ENCODE measurements at regions of chr14 and their contacts with region 1.

Region 1: GRCh38 chr14:64438181-64438841 is 27.0 kb upstream of the AKAP5 start:
- DNase-seq: no peak
- ATAC-seq: peak; percentile 51
- H3K4me3 Mint-ChIP-seq: no peak overlapping the region
- H3K27ac Mint-ChIP-seq: peak overlapping the region; percentile 9
- H3K4me1 Mint-ChIP-seq: peaks cover 16% of the 10 kb centered on the region
- H3K27me3 Mint-ChIP-seq: no peaks in the 10 kb centered on the region

Region 2: GRCh38 chr14:64324895-64325294 is 113.4 kb before region 1 on chr14:
- CTCF ChIA-PET with region 1: no interaction called
- POLR2A ChIA-PET with region 1: no interaction called
- DNase-seq: no peak
- ATAC-seq: no peak
- H3K4me3 Mint-ChIP-seq: no peak overlapping the region
- H3K27ac Mint-ChIP-seq: no peak overlapping the region
- H3K4me1 Mint-ChIP-seq: no peaks in the 10 kb centered on the region
- H3K27me3 Mint-ChIP-seq: peaks cover 19% of the 10 kb centered on the region

Region 3: DNA sequence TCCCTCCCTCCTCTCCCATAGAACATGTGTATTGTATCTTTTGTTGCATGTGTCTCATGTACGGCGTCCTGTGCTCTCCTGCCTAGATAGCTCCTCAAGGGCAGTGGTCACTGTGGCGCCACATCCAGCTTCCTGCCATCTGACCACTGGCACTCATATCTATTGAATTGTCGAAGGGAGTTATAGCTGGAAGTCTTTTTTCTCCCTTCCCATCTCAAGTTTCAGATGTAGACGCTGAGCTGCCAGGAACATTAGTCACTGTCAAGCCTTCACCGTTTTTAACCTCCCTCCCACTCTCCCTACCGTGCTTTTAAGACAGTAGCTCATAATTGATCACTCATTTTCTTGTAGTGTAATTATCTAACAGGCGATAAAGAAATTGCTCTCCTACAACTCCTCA is 17.1 kb before region 1 on chr14:
- CTCF ChIA-PET with region 1: interaction called, 89 read pairs
- POLR2A ChIA-PET with region 1: no interaction called
- DNase-seq: no peak
- ATAC-seq: no peak
- H3K4me3 Mint-ChIP-seq: no peak overlapping the region
- H3K27ac Mint-ChIP-seq: peak overlapping the region; percentile 28
- H3K4me1 Mint-ChIP-seq: peaks cover 7% of the 10 kb centered on the region
- H3K27me3 Mint-ChIP-seq: no peaks in the 10 kb centered on the region

Region 4: DNA sequence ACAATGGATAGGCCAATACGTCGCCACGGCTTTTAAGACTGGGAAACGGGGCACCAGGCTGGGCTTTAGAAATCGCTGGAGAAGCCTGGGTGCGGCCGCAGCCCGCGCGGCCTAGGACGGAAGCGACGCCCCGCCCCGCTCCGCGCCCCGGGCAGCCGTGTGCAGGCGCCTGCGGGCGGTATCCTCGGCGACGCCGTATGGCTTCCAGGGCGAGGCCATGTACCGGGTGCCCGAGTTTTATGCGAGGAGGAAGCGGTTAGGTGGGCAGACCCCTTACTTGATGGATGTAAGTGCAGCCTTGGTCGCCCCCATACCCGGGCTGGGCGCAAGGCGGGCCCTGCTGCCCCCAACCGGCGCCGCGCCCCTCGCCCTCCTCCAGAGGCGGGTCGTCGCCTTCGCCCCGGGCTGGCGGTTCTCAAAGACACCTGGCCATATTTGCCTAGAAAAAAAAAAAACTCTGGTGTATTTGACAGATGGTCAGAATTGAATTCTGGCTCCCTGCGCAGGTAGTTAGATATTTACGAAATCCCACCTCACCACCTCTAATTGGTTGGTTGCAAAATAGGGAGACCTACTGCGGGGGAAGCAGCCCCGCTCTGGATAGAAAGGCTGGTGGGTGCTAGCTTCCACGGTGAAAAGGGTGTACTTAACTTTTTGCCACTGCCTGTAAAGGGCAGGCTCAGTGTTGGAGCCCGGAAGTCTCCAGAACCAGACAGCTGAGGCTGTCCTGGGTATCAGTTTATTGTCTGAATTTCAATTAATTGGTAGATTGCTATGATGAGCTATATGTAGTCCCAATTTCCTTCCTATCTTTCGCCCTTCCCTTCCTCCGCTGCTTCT is 111.7 kb after region 1 on chr14 and contains the start of gene PPP1R36:
- CTCF ChIA-PET with region 1: no interaction called
- POLR2A ChIA-PET with region 1: no interaction called
- DNase-seq: peak; percentile 55
- ATAC-seq: peak; percentile 97
- H3K4me3 Mint-ChIP-seq: peak within 1 kb of the TSS; percentile 48
- H3K27ac Mint-ChIP-seq: peak within 1 kb of the TSS; percentile 45
- H3K4me1 Mint-ChIP-seq: peaks cover 14% of the 10 kb centered on the region
- H3K27me3 Mint-ChIP-seq: peaks cover 40% of the 10 kb centered on the region
- total RNA-seq, gene PPP1R36: 0.21 to 0.47 TPM

Region 5: GRCh38 chr14:64873506-64874219 is 435.4 kb after region 1 on chr14:
- CTCF ChIA-PET with region 1: no interaction called
- POLR2A ChIA-PET with region 1: no interaction called
- DNase-seq: no peak
- ATAC-seq: no peak
- H3K4me3 Mint-ChIP-seq: no peak overlapping the region
- H3K27ac Mint-ChIP-seq: no peak overlapping the region
- H3K4me1 Mint-ChIP-seq: no peaks in the 10 kb centered on the region
- H3K27me3 Mint-ChIP-seq: peaks cover 53% of the 10 kb centered on the region